Naive thymus-derived CD4-positive, alpha-beta T cell (primary cell): ENCODE measurements at regions of chr2 and their contacts with region 1.

Region 1: DNA sequence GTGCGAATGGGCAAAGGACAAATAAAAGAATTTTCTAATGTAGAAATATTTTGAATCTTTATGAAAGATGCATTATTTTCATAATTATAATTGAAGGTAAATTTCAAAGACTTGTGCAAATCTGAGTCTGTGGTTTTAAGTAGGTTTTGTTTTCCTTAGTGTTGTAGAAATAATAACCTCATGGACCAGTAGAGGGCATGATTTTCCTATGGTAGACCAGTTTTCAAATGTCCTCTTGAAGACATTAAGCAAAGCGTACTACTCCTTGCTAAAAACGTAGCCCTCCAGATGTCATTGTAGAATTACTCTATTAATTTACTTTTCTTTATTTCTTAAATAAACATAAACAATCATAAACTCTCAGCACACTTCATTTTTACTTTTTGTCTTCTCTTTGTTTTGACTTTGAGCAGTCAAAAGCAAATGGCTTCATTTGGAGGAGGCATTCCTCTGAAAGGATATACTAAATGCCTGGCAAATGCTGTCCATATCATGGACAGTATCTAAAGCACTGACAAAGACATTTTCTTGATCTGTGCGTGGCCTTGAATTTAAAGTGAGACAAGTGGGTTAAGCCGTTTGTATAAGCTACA is 85.8 kb upstream of the FAM237A start:
- DNase-seq: peak in 5 of 9 donors; percentile 4 to 45 (median 32)
- ATAC-seq: no peak
- H3K4me3 ChIP-seq: no peak overlapping the region
- H3K4me3 Mint-ChIP-seq: no peak overlapping the region
- H3K27ac ChIP-seq: no peak overlapping the region
- H3K27ac Mint-ChIP-seq: no peak overlapping the region
- H3K4me1 ChIP-seq: peaks cover 0 to 6% of the 10 kb centered on the region in 2 donors
- H3K4me1 Mint-ChIP-seq: peaks cover 1 to 37% (median 26%) of the 10 kb centered on the region in 7 donors
- H3K27me3 ChIP-seq: no peaks in the 10 kb centered on the region
- H3K27me3 Mint-ChIP-seq: peaks cover 5 to 29% (median 11%) of the 10 kb centered on the region in 5 donors

Region 2: DNA sequence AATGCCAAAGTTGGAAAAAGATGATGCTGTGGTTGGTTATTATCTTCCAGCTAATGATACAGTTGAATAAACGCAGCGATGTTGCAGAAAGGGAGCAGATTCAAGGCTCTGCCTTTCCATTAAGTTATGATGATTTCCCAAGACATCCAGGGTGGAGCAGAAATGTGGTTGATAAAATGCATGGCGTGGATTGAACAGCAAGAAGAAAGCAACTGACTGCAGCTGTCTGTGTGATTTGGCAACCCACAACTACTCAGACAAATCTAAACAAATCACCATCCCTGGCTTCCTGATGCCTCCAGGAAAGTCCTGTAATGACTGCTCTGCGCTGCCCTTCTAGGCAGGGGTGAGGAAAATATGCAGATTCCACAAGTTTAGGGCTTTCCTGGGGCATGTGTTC is 707.9 kb before region 1 on chr2:
- CTCF ChIA-PET with region 1: no interaction called
- POLR2A ChIA-PET with region 1: no interaction called
- intact Hi-C with region 1: no loop called
- DNase-seq: no peak
- ATAC-seq: no peak
- H3K4me3 ChIP-seq: no peak overlapping the region
- H3K4me3 Mint-ChIP-seq: no peak overlapping the region
- H3K27ac ChIP-seq: no peak overlapping the region
- H3K27ac Mint-ChIP-seq: no peak overlapping the region
- H3K4me1 ChIP-seq: no peaks in the 10 kb centered on the region
- H3K4me1 Mint-ChIP-seq: no peaks in the 10 kb centered on the region
- H3K27me3 ChIP-seq: no peaks in the 10 kb centered on the region
- H3K27me3 Mint-ChIP-seq: peaks cover 19 to 23% (median 19%) of the 10 kb centered on the region in 5 donors

Region 3: DNA sequence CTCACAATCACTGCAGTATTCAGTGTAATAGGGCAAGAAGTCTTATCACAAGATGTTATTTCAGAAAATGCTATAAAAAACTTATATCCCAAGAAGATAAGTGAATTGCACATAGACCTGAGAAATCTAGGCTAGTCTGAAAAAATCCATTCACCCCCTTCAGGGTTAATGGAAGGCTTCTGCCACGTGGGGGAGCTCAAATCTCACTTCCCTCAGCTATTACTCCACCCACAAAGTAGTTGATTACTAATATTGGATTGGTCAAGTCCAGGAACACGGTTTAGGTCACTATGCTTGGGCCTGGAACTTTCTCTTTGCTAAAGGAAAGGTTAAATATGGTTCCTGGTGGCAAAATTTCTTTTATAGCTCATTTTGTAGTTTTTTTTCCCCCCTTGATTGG is 164.3 kb before region 1 on chr2:
- CTCF ChIA-PET with region 1: interaction called, 3 read pairs
- POLR2A ChIA-PET with region 1: no interaction called
- intact Hi-C with region 1: loop called in 1 of 2 experiments (anchors 5 kb)
- DNase-seq: no peak
- ATAC-seq: peak; percentile 37
- H3K4me3 ChIP-seq: no peak overlapping the region
- H3K4me3 Mint-ChIP-seq: no peak overlapping the region
- H3K27ac ChIP-seq: no peak overlapping the region
- H3K27ac Mint-ChIP-seq: no peak overlapping the region
- H3K4me1 ChIP-seq: no peaks in the 10 kb centered on the region
- H3K4me1 Mint-ChIP-seq: no peaks in the 10 kb centered on the region
- H3K27me3 ChIP-seq: no peaks in the 10 kb centered on the region
- H3K27me3 Mint-ChIP-seq: peaks cover 0 to 5% (median 0%) of the 10 kb centered on the region in 5 donors

Region 4: GRCh38 chr2:206521612-206522011 is 34.8 kb before region 1 on chr2:
- CTCF ChIA-PET with region 1: no interaction called
- POLR2A ChIA-PET with region 1: no interaction called
- intact Hi-C with region 1: no loop called
- DNase-seq: no peak
- ATAC-seq: no peak
- H3K4me3 ChIP-seq: no peak overlapping the region
- H3K4me3 Mint-ChIP-seq: no peak overlapping the region
- H3K27ac ChIP-seq: no peak overlapping the region
- H3K27ac Mint-ChIP-seq: no peak overlapping the region
- H3K4me1 ChIP-seq: no peaks in the 10 kb centered on the region
- H3K4me1 Mint-ChIP-seq: peaks cover 0 to 4% (median 0%) of the 10 kb centered on the region in 7 donors
- H3K27me3 ChIP-seq: no peaks in the 10 kb centered on the region
- H3K27me3 Mint-ChIP-seq: peaks cover 0 to 17% (median 9%) of the 10 kb centered on the region in 5 donors

Region 5: DNA sequence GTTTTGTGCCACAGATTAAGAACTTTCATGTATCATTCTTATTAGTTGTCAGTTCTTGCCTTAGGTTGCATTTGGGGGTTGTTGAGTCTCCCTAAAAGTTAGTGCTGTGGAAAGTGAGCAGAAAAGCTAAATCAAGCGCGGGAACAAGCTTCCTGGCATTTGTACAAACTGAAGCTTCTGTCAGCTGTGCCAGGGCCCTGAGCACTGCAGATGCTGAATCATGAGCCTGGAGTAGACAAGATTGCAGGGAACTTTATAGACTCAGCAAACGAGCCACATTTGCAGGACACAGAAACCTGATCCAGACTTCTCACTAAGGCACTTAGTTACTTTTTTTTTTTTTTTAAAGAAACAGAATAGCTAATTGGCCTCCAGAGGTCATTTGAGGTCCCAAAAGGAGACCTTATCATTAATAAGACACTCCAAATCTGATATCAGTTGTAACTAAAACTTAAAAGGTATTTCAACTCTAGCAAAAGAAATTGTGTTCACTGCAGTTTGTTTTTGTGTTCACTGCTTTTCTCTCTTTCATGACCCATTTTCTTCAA is 24.4 kb before region 1 on chr2:
- CTCF ChIA-PET with region 1: no interaction called
- POLR2A ChIA-PET with region 1: no interaction called
- intact Hi-C with region 1: loop called in 1 of 2 experiments (anchors 1 kb)
- DNase-seq: no peak
- ATAC-seq: no peak
- H3K4me3 ChIP-seq: no peak overlapping the region
- H3K4me3 Mint-ChIP-seq: no peak overlapping the region
- H3K27ac ChIP-seq: no peak overlapping the region
- H3K27ac Mint-ChIP-seq: peak overlapping the region in 3 of 9 donors; percentile 74 to 95 (median 84)
- H3K4me1 ChIP-seq: peaks cover 0 to 8% of the 10 kb centered on the region in 2 donors
- H3K4me1 Mint-ChIP-seq: peaks cover 7 to 28% (median 18%) of the 10 kb centered on the region in 7 donors
- H3K27me3 ChIP-seq: no peaks in the 10 kb centered on the region
- H3K27me3 Mint-ChIP-seq: peaks cover 9 to 58% (median 20%) of the 10 kb centered on the region in 5 donors

Region 6: DNA sequence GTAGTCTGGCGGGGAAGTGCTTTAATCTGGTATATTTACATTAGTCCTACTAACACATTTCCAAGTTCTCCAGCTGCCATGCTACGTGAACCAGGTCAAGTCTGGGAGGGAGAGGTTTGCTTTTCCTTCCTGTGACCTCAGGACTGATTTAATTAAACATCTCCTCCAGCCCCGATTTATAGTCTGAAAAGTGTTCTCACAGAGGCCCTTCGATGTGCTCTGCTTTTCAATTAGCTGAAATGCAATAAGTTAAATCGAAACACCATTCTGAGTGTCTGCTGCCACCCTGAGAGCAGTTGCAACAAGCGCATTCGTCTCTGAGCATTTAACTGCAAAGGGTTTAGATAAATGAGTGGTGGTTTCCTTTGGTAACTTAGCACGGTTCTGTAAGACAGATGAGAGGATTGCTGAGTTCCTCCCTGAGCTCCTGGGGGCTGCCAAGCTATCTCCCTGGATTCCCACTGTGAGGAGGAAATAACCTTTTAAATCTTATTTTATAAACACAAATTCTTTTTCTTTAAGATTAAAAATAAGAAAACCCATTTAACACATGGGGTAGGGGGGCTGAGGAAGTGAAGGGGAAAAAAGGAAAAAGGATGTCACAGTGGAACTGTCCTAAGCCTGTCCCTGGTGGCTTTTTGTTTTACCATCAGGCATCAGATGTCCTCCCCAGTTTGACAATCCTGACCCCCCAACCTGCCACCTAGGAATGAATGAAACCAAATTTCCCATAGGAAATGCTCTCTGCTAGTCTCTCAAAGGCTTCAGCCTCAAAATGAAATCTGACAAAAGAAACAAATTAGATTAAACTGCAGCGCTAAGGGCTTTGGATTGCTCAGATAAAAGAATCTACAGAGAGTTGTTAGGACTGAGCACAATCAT is 916.8 kb after region 1 on chr2:
- CTCF ChIA-PET with region 1: interaction called, 4 read pairs
- POLR2A ChIA-PET with region 1: no interaction called
- intact Hi-C with region 1: loop called (anchors 1 to 5 kb)
- DNase-seq: peak in 8 of 9 donors; percentile 25 to 68 (median 52)
- ATAC-seq: peak; percentile 76
- H3K4me3 ChIP-seq: no peak overlapping the region
- H3K4me3 Mint-ChIP-seq: peak overlapping the region in 4 of 10 donors; percentile 20 to 52 (median 42)
- H3K27ac ChIP-seq: no peak overlapping the region
- H3K27ac Mint-ChIP-seq: peak overlapping the region in 7 of 9 donors; percentile 14 to 71 (median 48)
- H3K4me1 ChIP-seq: no peaks in the 10 kb centered on the region
- H3K4me1 Mint-ChIP-seq: peaks cover 6 to 23% (median 18%) of the 10 kb centered on the region in 7 donors
- H3K27me3 ChIP-seq: no peaks in the 10 kb centered on the region
- H3K27me3 Mint-ChIP-seq: peaks cover 0 to 4% (median 0%) of the 10 kb centered on the region in 5 donors